Motor neuron (in vitro differentiated cells): ENCODE measurements at regions of chr9 and their contacts with region 1.

Region 1: DNA sequence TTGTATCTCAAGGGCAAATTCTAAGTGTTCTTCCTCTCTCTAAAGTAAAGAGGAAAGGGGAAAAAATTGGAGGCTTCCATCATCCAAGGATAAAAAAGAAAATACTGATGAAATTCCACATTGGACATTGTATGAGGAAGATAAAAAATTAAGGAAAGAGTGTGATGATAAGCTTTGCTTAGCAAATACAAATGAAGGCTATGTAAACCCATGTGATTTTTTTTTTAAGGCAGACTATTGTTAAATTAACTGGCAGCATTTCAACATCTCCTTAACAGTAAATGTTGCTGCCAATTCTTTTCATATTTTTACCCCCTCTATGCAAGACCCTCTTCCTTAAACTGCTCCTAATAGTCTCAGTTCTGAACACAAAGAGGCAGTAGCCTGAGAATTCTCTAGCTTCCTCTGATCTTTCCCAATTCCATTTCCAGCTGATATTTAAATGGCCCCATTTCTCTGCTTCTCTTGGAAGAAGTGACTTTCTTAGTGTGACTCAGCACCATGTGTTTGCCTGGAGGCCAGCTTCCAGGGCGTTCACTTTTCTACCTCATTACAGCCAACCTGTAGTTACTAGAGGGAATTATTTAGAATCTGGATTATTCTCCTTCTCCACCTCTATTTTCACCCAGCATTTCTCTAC is 159.7 kb downstream of the TLE1 start:
- ATAC-seq: peak in 3 of 8 experiments; percentile 96 to 98 (median 97)
- H3K4me3 ChIP-seq: no peak overlapping the region
- H3K27ac ChIP-seq: no peak overlapping the region
- H3K4me1 ChIP-seq: peaks cover 7 to 13% of the 10 kb centered on the region in 2 donors

Region 2: DNA sequence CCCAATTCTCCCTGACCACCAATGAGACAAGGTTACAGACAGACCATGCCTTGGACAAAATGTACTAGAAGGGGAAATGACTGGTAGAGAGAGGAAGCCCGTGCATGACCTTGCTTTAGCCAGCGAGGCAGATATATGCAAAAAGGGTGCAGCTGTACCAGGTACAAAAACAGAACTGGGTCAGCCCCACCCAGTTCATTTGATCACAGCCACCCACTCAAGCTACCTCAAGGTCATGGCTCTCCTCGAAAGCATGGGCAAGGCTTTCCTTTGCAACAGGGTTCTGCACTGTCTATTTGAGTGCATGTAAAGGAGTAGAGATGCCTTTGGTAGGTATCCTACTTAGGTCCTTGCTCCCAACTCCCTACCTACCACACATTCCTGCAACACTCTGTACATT is 126.3 kb after region 1 on chr9:
- in situ Hi-C with region 1: loop called in 1 of 9 experiments (anchors 25 kb)
- ATAC-seq: no peak
- H3K4me3 ChIP-seq: no peak overlapping the region
- H3K27ac ChIP-seq: no peak overlapping the region
- H3K4me1 ChIP-seq: peaks cover 33 to 36% of the 10 kb centered on the region in 2 donors